Activated CD4-positive, alpha-beta T cell treated with anti-CD3 and anti-CD28 coated beads, Interleukin-2, amount 10 ng/mL, durations not matched to agents 24 days and 14 days (primary cell): ENCODE measurements at regions of chr11 and their contacts with region 1.

Region 1: DNA sequence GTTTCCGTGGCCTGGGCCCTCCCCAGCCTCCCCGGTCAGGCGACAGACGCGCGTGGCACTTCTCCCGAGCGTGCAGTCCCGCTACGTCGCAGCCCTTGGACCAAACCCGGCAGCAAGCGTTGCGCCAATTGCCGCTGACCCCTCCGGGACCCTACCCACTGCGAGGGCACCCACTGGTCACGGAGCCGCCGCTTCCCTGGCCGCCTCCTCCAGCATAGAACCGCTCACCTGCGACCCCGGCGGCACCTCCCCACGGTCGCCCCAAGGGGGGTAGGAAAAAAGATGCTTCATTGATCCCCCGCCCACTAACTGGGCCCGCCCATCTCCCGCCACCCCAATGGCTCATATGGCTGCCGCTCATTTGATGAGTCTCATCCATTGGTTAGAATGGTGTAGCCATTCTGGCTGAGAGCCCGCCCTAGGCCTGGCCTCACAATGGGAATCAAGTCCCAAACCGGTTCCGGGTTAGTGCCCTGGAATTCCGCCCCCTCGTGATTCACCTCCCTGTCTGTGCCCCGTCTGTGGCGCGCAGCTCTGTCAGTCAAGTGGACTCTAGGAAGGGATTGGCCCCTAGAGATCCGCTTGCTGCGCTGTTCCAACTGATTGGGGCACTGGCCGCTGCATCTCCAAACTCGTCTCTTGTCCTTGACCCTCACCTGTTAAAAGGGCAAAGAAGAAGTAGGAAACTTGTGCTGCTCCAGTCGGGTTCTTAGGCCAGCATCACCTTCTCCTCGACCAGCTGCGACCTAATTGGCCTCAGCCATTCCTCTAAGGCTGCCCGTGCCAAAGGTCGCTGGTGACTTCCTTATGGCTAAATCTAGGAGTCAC is at the start of gene MSANTD4:
- DNase-seq: peak; percentile 99
- H3K4me3 Mint-ChIP-seq: peak within 1 kb of the TSS; percentile 97
- H3K27ac Mint-ChIP-seq: peak within 1 kb of the TSS; percentile 96
- H3K4me1 Mint-ChIP-seq: peaks cover 37% of the 10 kb centered on the region
- H3K27me3 Mint-ChIP-seq: peaks cover 13% of the 10 kb centered on the region
- total RNA-seq, gene MSANTD4: 21.8 and 22.8 TPM in 2 replicates

Region 2: GRCh38 chr11:105811242-105811641 is 210.9 kb before region 1 on chr11:
- intact Hi-C with region 1: no loop called
- DNase-seq: no peak
- H3K4me3 Mint-ChIP-seq: no peak overlapping the region
- H3K27ac Mint-ChIP-seq: no peak overlapping the region
- H3K4me1 Mint-ChIP-seq: no peaks in the 10 kb centered on the region
- H3K27me3 Mint-ChIP-seq: no peaks in the 10 kb centered on the region

Region 3: DNA sequence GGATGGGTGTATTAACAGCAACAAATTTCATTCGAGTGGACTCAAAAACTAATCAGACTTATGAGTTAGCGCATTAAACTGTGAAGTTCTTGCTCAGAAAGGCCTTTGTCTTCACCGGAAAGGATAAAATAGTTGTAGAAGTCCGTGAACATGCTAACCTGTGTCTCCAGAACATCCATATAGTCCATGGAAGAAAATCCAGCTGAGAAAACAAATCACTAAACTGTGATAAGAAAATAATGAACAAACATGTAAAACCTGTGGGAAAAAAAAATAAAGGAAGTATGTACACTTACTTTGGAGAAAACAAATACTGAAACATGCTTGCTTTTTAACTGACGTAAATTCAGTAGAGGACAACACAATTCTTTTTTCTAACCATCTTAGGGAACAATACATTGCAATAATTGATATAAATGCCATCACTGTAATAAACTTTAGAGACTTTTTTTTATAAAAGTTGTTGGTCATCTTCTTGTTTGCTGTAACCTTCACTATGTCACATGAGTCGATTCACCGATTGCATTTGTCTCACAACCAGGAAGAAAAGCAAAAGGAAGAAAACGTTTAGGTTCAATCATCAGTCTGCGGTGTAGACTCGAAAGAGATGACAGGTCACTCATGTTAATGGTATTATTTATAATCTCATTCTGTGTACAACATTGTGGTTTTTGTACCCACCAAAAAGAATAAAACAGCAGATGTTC is 42.0 kb before region 1 on chr11:
- intact Hi-C with region 1: no loop called
- DNase-seq: no peak
- H3K4me3 Mint-ChIP-seq: no peak overlapping the region
- H3K27ac Mint-ChIP-seq: no peak overlapping the region
- H3K4me1 Mint-ChIP-seq: no peaks in the 10 kb centered on the region
- H3K27me3 Mint-ChIP-seq: peaks cover 2% of the 10 kb centered on the region

Region 4: DNA sequence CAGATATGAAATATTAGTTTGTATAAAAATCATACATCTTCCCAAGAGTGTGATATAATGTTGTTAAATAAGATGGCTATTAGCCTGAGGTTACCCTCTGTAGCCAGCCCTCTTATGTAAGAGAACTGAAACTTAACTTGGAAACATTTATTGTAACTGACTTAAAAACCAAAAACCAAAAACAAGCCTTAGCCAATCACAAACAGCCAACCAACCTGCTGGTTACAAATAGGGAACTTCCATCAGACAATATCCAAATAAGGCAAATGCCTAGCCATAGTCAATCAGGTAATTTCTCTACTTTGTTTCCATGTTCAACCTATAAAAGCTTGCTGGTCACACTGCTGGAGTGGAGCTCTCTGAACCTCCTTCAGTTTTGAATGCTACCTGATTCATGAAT is 40.8 kb after region 1 on chr11:
- intact Hi-C with region 1: loop called (anchors 2 kb)
- DNase-seq: no peak
- H3K4me3 Mint-ChIP-seq: no peak overlapping the region
- H3K27ac Mint-ChIP-seq: no peak overlapping the region
- H3K4me1 Mint-ChIP-seq: peaks cover 8% of the 10 kb centered on the region
- H3K27me3 Mint-ChIP-seq: no peaks in the 10 kb centered on the region

Region 5: DNA sequence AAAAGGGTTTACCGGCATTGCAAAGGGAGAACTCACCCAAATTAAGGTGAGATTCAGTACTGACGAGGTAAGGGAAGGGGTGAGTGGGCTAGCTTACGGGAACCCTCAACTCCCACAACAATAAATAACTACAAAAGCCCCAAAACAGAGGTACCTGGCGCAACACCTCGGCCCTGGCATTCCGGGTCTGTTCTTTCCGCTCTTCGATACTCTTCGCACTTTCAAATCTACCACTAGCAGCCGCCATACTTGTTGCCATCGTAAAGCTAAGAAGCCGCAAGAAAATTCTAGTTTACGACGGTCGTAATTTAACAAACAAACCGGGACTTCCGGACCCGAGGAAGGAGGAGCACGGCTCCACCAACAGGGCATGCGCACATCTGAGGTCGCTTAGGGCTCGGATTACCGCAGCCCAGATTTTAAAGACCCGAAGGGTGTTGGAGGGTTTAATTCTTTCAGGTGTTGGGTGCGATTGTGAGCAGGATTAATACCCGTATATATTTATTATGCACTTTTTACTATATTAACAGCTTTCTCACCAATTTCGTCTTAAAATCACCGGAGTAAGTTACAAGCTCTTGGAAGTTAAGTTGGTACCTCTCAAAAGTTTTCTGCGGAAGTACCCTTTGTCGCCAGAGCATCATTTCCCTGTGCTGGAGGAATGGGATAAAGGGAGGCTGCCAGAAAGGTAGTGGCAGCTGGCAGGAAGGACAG is 1435.5 kb after region 1 on chr11 and contains the start of gene CWF19L2:
- intact Hi-C with region 1: loop called (anchors 5 kb)
- DNase-seq: peak; percentile 96
- H3K4me3 Mint-ChIP-seq: peak within 1 kb of the TSS; percentile 85
- H3K27ac Mint-ChIP-seq: peak within 1 kb of the TSS; percentile 87
- H3K4me1 Mint-ChIP-seq: peaks cover 22% of the 10 kb centered on the region
- H3K27me3 Mint-ChIP-seq: peaks cover 7% of the 10 kb centered on the region
- total RNA-seq, gene CWF19L2: 16.1 and 17.6 TPM in 2 replicates